CD4-positive, alpha-beta memory T cell (primary cell): ENCODE measurements at regions of chr17 and their contacts with region 1.

Region 1: DNA sequence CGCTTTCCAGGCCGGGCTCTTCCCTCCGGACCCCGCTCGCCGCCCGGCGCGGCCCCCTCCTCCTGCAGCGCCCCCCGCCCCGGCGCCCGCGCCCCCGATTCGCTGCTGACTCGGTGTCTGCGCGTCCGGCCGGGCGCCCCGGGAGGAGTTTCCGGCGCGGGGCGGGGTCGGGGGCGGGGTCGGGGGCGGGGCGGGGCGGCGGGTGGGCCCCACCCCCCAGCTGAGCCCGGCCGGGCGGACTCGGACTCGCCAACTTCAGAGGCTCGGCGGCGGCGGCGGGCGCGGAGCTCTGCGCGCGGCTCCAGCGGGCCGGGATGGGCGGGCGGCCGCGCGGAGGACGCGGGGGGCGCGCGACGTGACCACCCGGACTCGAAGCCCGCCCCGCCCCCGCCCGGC is at the start of gene METRNL:
- DNase-seq: peak in 4 of 5 donors; percentile 38 to 57 (median 44)
- H3K4me3 ChIP-seq: peak within 1 kb of the TSS in 1 of 2 donors; percentile 49
- H3K4me3 Mint-ChIP-seq: peak within 1 kb of the TSS in 5 of 8 donors; percentile 22 to 69 (median 66)
- H3K27ac ChIP-seq: no peak within 1 kb of the TSS
- H3K27ac Mint-ChIP-seq: no peak within 1 kb of the TSS
- H3K4me1 ChIP-seq: peaks cover 27% of the 10 kb centered on the region
- H3K4me1 Mint-ChIP-seq: peaks cover 12 to 33% (median 25%) of the 10 kb centered on the region in 4 donors
- H3K27me3 ChIP-seq: no peaks in the 10 kb centered on the region
- H3K27me3 Mint-ChIP-seq: no peaks in the 10 kb centered on the region
- total RNA-seq, gene METRNL: 6.2 to 6.5 TPM

Region 2: GRCh38 chr17:82972836-82973372 is 106.4 kb before region 1 on chr17:
- CTCF ChIA-PET with region 1: no interaction called
- POLR2A ChIA-PET with region 1: no interaction called
- intact Hi-C with region 1: no loop called
- DNase-seq: no peak
- H3K4me3 ChIP-seq: no peak overlapping the region
- H3K4me3 Mint-ChIP-seq: no peak overlapping the region
- H3K27ac ChIP-seq: no peak overlapping the region
- H3K27ac Mint-ChIP-seq: peak overlapping the region in 1 of 7 donors; percentile 75
- H3K4me1 ChIP-seq: peaks cover 3% of the 10 kb centered on the region
- H3K4me1 Mint-ChIP-seq: peaks cover 0 to 11% (median under 1%) of the 10 kb centered on the region in 4 donors
- H3K27me3 ChIP-seq: no peaks in the 10 kb centered on the region
- H3K27me3 Mint-ChIP-seq: no peaks in the 10 kb centered on the region

Region 3: DNA sequence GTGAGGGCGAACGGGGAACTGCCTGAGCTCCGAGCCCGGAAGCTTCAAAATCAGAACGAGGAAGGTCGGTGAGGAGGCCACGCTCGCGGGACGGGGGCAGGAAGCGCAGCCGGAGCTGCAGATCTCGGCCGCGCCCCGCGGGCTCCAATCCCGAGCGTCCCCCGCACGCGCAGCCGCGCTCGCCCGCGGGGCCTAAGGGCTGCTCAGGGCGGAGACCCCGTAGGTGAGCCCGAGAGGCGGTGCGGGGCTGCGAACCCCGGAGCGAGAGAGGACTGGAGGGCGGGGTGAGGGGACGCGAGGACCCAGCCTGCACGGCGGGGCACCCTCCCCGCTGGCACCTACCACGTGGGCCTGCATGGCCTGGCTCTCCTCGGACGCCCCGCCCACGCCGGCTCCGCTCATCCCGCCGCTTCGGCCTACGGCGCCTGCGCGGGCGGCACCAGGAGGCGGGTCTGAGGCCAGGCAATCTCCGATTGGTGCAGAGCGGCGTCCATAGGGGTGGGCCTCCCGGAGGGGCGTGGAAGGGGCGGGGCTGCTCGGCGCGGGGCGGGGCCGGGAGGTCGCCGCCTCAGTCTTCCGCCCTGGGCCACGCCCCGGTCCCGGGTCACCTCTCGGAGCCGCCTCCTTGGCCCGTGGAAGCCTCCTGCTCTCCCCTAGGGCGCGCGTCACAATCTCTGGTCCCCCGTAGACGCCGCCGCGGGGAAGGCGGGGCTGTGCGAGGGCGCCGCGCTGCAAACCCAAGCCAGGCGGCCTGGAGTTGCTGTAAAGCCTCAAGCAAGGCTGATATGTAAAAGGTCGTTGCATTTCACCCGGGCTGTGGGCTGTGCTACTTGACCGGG is 27.7 kb before region 1 on chr17:
- CTCF ChIA-PET with region 1: no interaction called
- POLR2A ChIA-PET with region 1: interaction called, 19 read pairs
- intact Hi-C with region 1: loop called (anchors 1 kb)
- DNase-seq: peak; percentile 97 to 100 (median 99)
- H3K4me3 ChIP-seq: peak overlapping the region; percentile 42 to 87
- H3K4me3 Mint-ChIP-seq: peak overlapping the region; percentile 77 to 88 (median 81)
- H3K27ac ChIP-seq: peak overlapping the region; percentile 82
- H3K27ac Mint-ChIP-seq: peak overlapping the region; percentile 81 to 97 (median 90)
- H3K4me1 ChIP-seq: peaks cover 43% of the 10 kb centered on the region
- H3K4me1 Mint-ChIP-seq: peaks cover 15 to 50% (median 34%) of the 10 kb centered on the region in 4 donors
- H3K27me3 ChIP-seq: no peaks in the 10 kb centered on the region
- H3K27me3 Mint-ChIP-seq: no peaks in the 10 kb centered on the region

Region 4: DNA sequence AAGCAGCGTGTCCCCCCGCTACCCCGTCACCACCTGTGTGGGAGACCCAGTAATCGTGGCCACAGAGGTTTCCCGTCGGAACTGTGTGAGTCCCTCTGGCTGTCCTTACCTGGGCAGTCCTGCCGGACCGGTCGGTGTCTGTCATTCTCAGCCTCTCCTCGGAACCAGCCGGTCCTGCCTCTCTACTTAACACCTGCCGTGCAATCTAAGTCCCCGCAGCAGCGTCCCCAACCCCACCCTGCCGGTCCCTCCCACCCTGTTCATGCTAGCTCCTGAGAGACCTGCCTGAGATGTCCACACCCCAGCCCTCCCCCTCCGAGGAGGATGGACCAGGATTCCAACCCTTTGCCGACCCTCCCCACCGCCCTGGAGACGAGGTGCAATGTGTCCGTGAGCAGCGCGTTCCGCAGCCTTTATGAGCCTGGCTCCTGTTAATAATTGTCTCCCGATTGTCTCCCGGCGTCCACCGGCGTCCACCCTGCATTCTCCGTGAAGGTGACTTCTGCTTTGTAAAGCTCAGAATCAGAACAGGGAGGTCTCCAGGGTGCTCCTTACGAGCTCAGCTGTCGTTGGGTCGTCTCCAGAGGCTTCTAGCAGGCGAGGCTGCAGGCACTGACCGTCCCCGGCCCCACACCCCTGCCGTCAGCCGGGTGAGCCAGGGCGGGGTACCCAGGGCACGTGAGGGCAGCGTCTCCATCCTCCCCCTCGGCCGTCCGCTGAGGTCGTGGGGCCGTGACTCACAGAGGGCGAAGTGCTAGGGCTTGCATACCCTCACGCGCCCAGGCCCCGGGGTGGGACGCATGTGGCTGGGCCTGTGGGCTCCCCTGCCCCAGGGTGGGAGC is 10.2 kb after region 1 on chr17:
- CTCF ChIA-PET with region 1: no interaction called
- POLR2A ChIA-PET with region 1: no interaction called
- intact Hi-C with region 1: no loop called
- DNase-seq: no peak
- H3K4me3 ChIP-seq: no peak overlapping the region
- H3K4me3 Mint-ChIP-seq: peak overlapping the region in 1 of 8 donors; percentile 62
- H3K27ac ChIP-seq: no peak overlapping the region
- H3K27ac Mint-ChIP-seq: peak overlapping the region in 1 of 7 donors; percentile 64
- H3K4me1 ChIP-seq: peaks cover 8% of the 10 kb centered on the region
- H3K4me1 Mint-ChIP-seq: peaks cover 2 to 15% (median 5%) of the 10 kb centered on the region in 4 donors
- H3K27me3 ChIP-seq: no peaks in the 10 kb centered on the region
- H3K27me3 Mint-ChIP-seq: no peaks in the 10 kb centered on the region